Naive thymus-derived CD4-positive, alpha-beta T cell (primary cell): ENCODE measurements at regions of chr15 and their contacts with region 1.

Region 1: GRCh38 chr15:55290528-55291057 is 980 bp upstream of the RAB27A start:
- DNase-seq: peak; percentile 72 to 84 (median 80)
- ATAC-seq: peak; percentile 87
- H3K4me3 ChIP-seq: peak overlapping the region; percentile 90
- H3K4me3 Mint-ChIP-seq: peak overlapping the region; percentile 85 to 95 (median 90)
- H3K27ac ChIP-seq: peak overlapping the region; percentile 95
- H3K27ac Mint-ChIP-seq: peak overlapping the region; percentile 87 to 94 (median 92)
- H3K4me1 ChIP-seq: peaks cover 13 to 14% of the 10 kb centered on the region in 2 donors
- H3K4me1 Mint-ChIP-seq: peaks cover 20 to 40% (median 34%) of the 10 kb centered on the region in 7 donors
- H3K27me3 ChIP-seq: no peaks in the 10 kb centered on the region
- H3K27me3 Mint-ChIP-seq: peaks cover 0 to 4% (median 0%) of the 10 kb centered on the region in 5 donors

Region 2: GRCh38 chr15:53808058-53808706 is 1482.4 kb before region 1 on chr15:
- CTCF ChIA-PET with region 1: no interaction called
- POLR2A ChIA-PET with region 1: no interaction called
- intact Hi-C with region 1: loop called in 1 of 2 experiments (anchors 10 kb)
- DNase-seq: no peak
- ATAC-seq: no peak
- H3K4me3 ChIP-seq: no peak overlapping the region
- H3K4me3 Mint-ChIP-seq: no peak overlapping the region
- H3K27ac ChIP-seq: no peak overlapping the region
- H3K27ac Mint-ChIP-seq: no peak overlapping the region
- H3K4me1 ChIP-seq: no peaks in the 10 kb centered on the region
- H3K4me1 Mint-ChIP-seq: peaks cover 0 to 5% (median 0%) of the 10 kb centered on the region in 7 donors
- H3K27me3 ChIP-seq: no peaks in the 10 kb centered on the region
- H3K27me3 Mint-ChIP-seq: peaks cover 0 to 16% (median 6%) of the 10 kb centered on the region in 5 donors

Region 3: DNA sequence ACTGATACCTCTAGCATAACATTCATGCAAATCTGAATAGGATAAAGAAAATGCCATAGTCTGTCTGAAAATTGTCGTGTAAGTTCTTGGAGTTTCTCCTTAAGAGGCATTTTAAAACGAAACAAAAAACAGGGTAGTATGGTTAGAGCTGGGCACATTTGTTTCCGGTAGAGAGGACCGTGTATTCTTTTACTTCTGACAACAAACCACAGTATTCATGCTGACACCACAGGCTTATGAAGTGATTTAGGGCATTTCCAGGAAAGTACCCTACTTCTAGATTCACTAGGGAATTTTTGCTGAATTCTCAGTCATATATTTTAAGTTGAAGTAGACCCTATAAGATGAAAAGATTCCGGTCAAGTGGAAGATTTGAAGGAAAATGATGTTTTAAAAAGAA is 771.0 kb before region 1 on chr15:
- CTCF ChIA-PET with region 1: no interaction called
- POLR2A ChIA-PET with region 1: no interaction called
- intact Hi-C with region 1: no loop called
- DNase-seq: peak in 3 of 9 donors; percentile 0 to 7 (median 1)
- ATAC-seq: peak; percentile 56
- H3K4me3 ChIP-seq: no peak overlapping the region
- H3K4me3 Mint-ChIP-seq: peak overlapping the region in 8 of 10 donors; percentile 17 to 76 (median 58)
- H3K27ac ChIP-seq: no peak overlapping the region
- H3K27ac Mint-ChIP-seq: peak overlapping the region in 3 of 9 donors; percentile 0 to 67 (median 41)
- H3K4me1 ChIP-seq: no peaks in the 10 kb centered on the region
- H3K4me1 Mint-ChIP-seq: peaks cover 8 to 28% (median 22%) of the 10 kb centered on the region in 7 donors
- H3K27me3 ChIP-seq: no peaks in the 10 kb centered on the region
- H3K27me3 Mint-ChIP-seq: peaks cover 0 to 5% (median 0%) of the 10 kb centered on the region in 5 donors

Region 4: GRCh38 chr15:55196458-55197361 is 93.9 kb before region 1 on chr15 and contains the start of gene RSL24D1:
- CTCF ChIA-PET with region 1: interaction called, 4 read pairs
- POLR2A ChIA-PET with region 1: interaction called, 6 read pairs
- intact Hi-C with region 1: loop called (anchors 1 kb)
- DNase-seq: peak; percentile 83 to 98 (median 95)
- ATAC-seq: peak; percentile 98
- H3K4me3 ChIP-seq: peak within 1 kb of the TSS; percentile 93
- H3K4me3 Mint-ChIP-seq: no peak within 1 kb of the TSS
- H3K27ac ChIP-seq: peak within 1 kb of the TSS; percentile 89
- H3K27ac Mint-ChIP-seq: no peak within 1 kb of the TSS
- H3K4me1 ChIP-seq: peaks cover 29 to 39% of the 10 kb centered on the region in 2 donors
- H3K4me1 Mint-ChIP-seq: peaks cover 0 to 24% (median 21%) of the 10 kb centered on the region in 7 donors
- H3K27me3 ChIP-seq: no peaks in the 10 kb centered on the region
- H3K27me3 Mint-ChIP-seq: no peaks in the 10 kb centered on the region
- total RNA-seq, gene RSL24D1: 75.9 to 128 (median 110) TPM

Region 5: DNA sequence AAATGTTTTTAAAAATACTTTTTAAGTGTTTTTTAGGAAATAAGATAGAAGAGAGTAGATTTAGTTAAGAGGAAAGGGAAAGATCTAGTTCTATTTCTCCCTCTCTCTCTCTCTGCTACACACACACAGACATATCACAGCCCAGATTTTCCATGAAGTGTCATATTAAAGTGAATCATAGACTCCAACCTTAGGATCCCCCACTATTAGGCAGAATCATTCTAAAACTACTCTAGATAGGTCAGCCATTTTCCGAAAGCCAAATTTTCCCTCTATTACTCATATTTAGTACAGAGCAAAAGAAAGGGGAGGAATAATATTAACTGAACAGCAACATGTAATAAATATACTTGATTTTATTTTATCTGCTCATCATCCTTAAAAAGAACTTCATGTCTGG is 48.7 kb before region 1 on chr15:
- CTCF ChIA-PET with region 1: interaction called, 3 read pairs
- POLR2A ChIA-PET with region 1: interaction called, 3 read pairs
- intact Hi-C with region 1: loop called in 1 of 2 experiments (anchors 1 kb)
- DNase-seq: no peak
- ATAC-seq: no peak
- H3K4me3 ChIP-seq: no peak overlapping the region
- H3K4me3 Mint-ChIP-seq: no peak overlapping the region
- H3K27ac ChIP-seq: no peak overlapping the region
- H3K27ac Mint-ChIP-seq: peak overlapping the region in 1 of 9 donors; percentile 21
- H3K4me1 ChIP-seq: peaks cover 7 to 27% of the 10 kb centered on the region in 2 donors
- H3K4me1 Mint-ChIP-seq: peaks cover 6 to 59% (median 23%) of the 10 kb centered on the region in 7 donors
- H3K27me3 ChIP-seq: no peaks in the 10 kb centered on the region
- H3K27me3 Mint-ChIP-seq: no peaks in the 10 kb centered on the region

Region 6: GRCh38 chr15:55267401-55268175 is 23.0 kb before region 1 on chr15:
- CTCF ChIA-PET with region 1: interaction called, 6 read pairs
- POLR2A ChIA-PET with region 1: interaction called, 6 read pairs
- intact Hi-C with region 1: loop called (anchors 1 kb)
- DNase-seq: peak; percentile 42 to 75 (median 68)
- ATAC-seq: peak; percentile 96
- H3K4me3 ChIP-seq: peak overlapping the region; percentile 52
- H3K4me3 Mint-ChIP-seq: peak overlapping the region; percentile 71 to 85 (median 79)
- H3K27ac ChIP-seq: peak overlapping the region; percentile 70
- H3K27ac Mint-ChIP-seq: peak overlapping the region; percentile 85 to 97 (median 92)
- H3K4me1 ChIP-seq: peaks cover 19 to 71% of the 10 kb centered on the region in 2 donors
- H3K4me1 Mint-ChIP-seq: peaks cover 33 to 58% (median 45%) of the 10 kb centered on the region in 7 donors
- H3K27me3 ChIP-seq: no peaks in the 10 kb centered on the region
- H3K27me3 Mint-ChIP-seq: no peaks in the 10 kb centered on the region

Region 7: GRCh38 chr15:55318588-55319494 is 28.2 kb after region 1 on chr15 and contains the starts of genes PIGB and PIGBOS1:
- CTCF ChIA-PET with region 1: interaction called, 3 read pairs
- POLR2A ChIA-PET with region 1: interaction called, 6 read pairs
- intact Hi-C with region 1: loop called (anchors 1 kb)
- DNase-seq: peak; percentile 73 to 88 (median 84)
- ATAC-seq: peak; percentile 91
- H3K4me3 ChIP-seq: peak within 1 kb of the TSS; percentile 95
- H3K4me3 Mint-ChIP-seq: peak within 1 kb of the TSS; percentile 98 to 99 (median 98)
- H3K27ac ChIP-seq: peak within 1 kb of the TSS; percentile 98
- H3K27ac Mint-ChIP-seq: peak within 1 kb of the TSS; percentile 99 to 100 (median 100)
- H3K4me1 ChIP-seq: peaks cover 5 to 28% of the 10 kb centered on the region in 2 donors
- H3K4me1 Mint-ChIP-seq: peaks cover 41 to 86% (median 76%) of the 10 kb centered on the region in 7 donors
- H3K27me3 ChIP-seq: no peaks in the 10 kb centered on the region
- H3K27me3 Mint-ChIP-seq: no peaks in the 10 kb centered on the region
- total RNA-seq, gene PIGB: 21.4 to 30.2 (median 24.3) TPM
- total RNA-seq, gene PIGBOS1: 8.8 to 21.3 (median 12.5) TPM

Region 8: GRCh38 chr15:55434989-55435825 is 144.6 kb after region 1 on chr15:
- CTCF ChIA-PET with region 1: interaction called, 3 read pairs
- POLR2A ChIA-PET with region 1: no interaction called
- intact Hi-C with region 1: loop called (anchors 1 to 2 kb)
- DNase-seq: peak in 5 of 9 donors; percentile 30 to 43 (median 33)
- ATAC-seq: peak; percentile 68
- H3K4me3 ChIP-seq: no peak overlapping the region
- H3K4me3 Mint-ChIP-seq: no peak overlapping the region
- H3K27ac ChIP-seq: no peak overlapping the region
- H3K27ac Mint-ChIP-seq: no peak overlapping the region
- H3K4me1 ChIP-seq: no peaks in the 10 kb centered on the region
- H3K4me1 Mint-ChIP-seq: peaks cover 0 to 10% (median 5%) of the 10 kb centered on the region in 7 donors
- H3K27me3 ChIP-seq: no peaks in the 10 kb centered on the region
- H3K27me3 Mint-ChIP-seq: peaks cover 0 to 4% (median 0%) of the 10 kb centered on the region in 5 donors